ENCODE measurements at regions of chr18 and their contacts with region 1.

Region 1: GRCh38 chr18:2655178-2655953 is at the start of gene SMCHD1:
- DNase-seq: peak; percentile 49 to 91
- H3K4me3 ChIP-seq: peak within 1 kb of the TSS; percentile 74
- H3K27ac ChIP-seq: peak within 1 kb of the TSS; percentile 83
- H3K4me1 ChIP-seq: peaks cover 50% of the 10 kb centered on the region
- H3K27me3 ChIP-seq: no peaks in the 10 kb centered on the region
- CTCF ChIP-seq: no peak
- total RNA-seq, gene SMCHD1: 44.9 and 73.7 TPM in 2 replicates

Region 2: DNA sequence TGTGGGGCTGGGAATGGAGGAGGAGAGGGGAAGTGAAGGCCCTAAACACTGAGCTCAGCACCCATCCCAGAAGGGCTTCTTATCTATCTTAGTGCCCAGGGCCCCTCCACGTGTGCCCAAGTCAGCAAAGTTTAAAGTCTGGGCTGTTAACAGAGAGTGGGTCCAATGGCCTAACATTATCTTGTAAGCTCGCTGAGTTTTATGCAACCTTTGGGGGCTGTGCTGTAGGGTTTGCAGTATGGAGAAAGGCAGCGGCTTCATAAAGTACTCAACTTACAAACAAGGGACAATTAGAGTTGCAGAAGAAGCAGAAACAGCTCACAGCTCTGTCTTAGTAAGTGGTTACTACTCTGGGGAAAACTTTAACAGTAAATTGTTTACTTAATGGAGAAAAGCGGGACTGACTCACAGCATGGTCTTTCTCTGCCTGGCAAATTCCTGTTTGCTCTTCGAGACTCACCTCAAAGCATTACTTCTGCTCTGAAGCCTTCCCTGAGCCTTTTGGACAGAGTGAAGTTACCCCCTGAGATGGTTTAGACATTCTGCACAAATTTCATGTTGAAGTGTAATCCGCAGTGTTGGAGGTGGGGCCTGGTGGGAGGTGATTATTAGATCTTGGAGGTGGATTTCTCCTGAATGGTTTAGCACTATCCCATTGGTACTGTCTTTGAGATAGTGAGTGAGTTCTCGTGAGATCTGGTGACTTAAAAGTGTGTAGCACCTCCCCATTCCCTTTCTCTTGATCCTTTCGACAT is 1952.0 kb before region 1 on chr18:
- CTCF ChIA-PET with region 1: no interaction called
- POLR2A ChIA-PET with region 1: interaction called, 11 read pairs
- intact Hi-C with region 1: no loop called
- DNase-seq: peak in 1 of 2 experiments; percentile 57
- H3K4me3 ChIP-seq: no peak overlapping the region
- H3K27ac ChIP-seq: peak overlapping the region; percentile 73
- H3K4me1 ChIP-seq: peaks cover 23% of the 10 kb centered on the region
- H3K27me3 ChIP-seq: no peaks in the 10 kb centered on the region
- CTCF ChIP-seq: no peak

Region 3: GRCh38 chr18:2486426-2486825 is 168.9 kb before region 1 on chr18:
- CTCF ChIA-PET with region 1: no interaction called
- POLR2A ChIA-PET with region 1: no interaction called
- intact Hi-C with region 1: no loop called
- DNase-seq: no peak
- H3K4me3 ChIP-seq: no peak overlapping the region
- H3K27ac ChIP-seq: no peak overlapping the region
- H3K4me1 ChIP-seq: no peaks in the 10 kb centered on the region
- H3K27me3 ChIP-seq: no peaks in the 10 kb centered on the region
- CTCF ChIP-seq: no peak

Region 4: GRCh38 chr18:2536493-2536892 is 118.9 kb before region 1 on chr18:
- CTCF ChIA-PET with region 1: no interaction called
- POLR2A ChIA-PET with region 1: no interaction called
- intact Hi-C with region 1: no loop called
- DNase-seq: no peak
- H3K4me3 ChIP-seq: no peak overlapping the region
- H3K27ac ChIP-seq: no peak overlapping the region
- H3K4me1 ChIP-seq: peaks cover 2% of the 10 kb centered on the region; the same call in 1 of the 2 replicates
- H3K27me3 ChIP-seq: no peaks in the 10 kb centered on the region
- CTCF ChIP-seq: no peak

Region 5: GRCh38 chr18:2571200-2572143 is 83.9 kb before region 1 on chr18 and contains the starts of genes METTL4 and NDC80:
- CTCF ChIA-PET with region 1: no interaction called
- POLR2A ChIA-PET with region 1: interaction called, 3 read pairs
- intact Hi-C with region 1: loop called (anchors 2 kb)
- DNase-seq: peak; percentile 78 to 86
- H3K4me3 ChIP-seq: peak within 1 kb of the TSS; percentile 88
- H3K27ac ChIP-seq: peak within 1 kb of the TSS; percentile 98
- H3K4me1 ChIP-seq: peaks cover 39% of the 10 kb centered on the region
- H3K27me3 ChIP-seq: no peaks in the 10 kb centered on the region
- CTCF ChIP-seq: no peak
- total RNA-seq, gene METTL4: 21.8 and 23.9 TPM in 2 replicates
- total RNA-seq, gene NDC80: 71.7 and 89.2 TPM in 2 replicates

Region 6: DNA sequence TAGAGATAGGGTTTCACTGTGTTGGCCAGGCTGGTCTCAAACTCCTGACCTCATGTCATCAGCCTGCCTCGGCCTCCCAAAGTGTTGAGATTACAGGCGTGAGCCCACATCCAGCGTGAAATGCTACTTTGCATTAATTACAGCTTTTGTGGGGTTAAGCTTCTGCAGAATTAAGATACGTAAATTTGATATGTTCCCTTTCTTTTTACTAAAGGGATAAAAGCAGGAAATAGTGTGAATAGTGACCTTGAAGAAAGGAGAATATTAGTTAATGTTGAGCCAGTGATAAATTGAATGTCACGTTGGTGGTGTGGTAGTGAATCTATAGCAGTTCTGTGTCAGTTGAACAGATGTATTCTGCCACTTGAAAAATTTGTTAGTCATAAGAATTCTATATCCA is 17.0 kb after region 1 on chr18:
- CTCF ChIA-PET with region 1: no interaction called
- POLR2A ChIA-PET with region 1: interaction called, 21 read pairs
- intact Hi-C with region 1: no loop called
- DNase-seq: no peak
- H3K4me3 ChIP-seq: no peak overlapping the region
- H3K27ac ChIP-seq: no peak overlapping the region
- H3K4me1 ChIP-seq: no peaks in the 10 kb centered on the region
- H3K27me3 ChIP-seq: no peaks in the 10 kb centered on the region
- CTCF ChIP-seq: no peak

Region 7: DNA sequence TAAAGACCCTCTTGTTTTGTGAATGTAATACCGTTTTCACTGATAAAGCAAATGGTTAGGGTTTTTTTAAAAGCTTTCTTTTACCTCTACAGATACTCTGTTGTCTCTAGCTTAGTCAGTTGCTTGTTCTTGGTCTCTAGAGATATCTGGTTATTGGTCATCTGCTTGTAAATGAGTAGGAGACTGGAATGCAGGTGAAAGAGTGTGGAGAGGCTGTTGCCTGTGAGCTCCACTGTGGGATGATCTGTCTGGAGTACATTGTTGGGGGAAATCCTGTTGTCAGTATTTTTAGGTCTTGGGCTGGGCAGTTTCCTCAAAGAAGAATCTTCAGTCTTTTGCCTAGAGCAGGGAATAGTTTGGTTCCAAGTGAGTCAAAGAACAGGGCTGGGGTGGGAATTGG is 67.8 kb after region 1 on chr18:
- CTCF ChIA-PET with region 1: no interaction called
- POLR2A ChIA-PET with region 1: interaction called, 10 read pairs
- intact Hi-C with region 1: no loop called
- DNase-seq: no peak
- H3K4me3 ChIP-seq: no peak overlapping the region
- H3K27ac ChIP-seq: no peak overlapping the region
- H3K4me1 ChIP-seq: no peaks in the 10 kb centered on the region
- H3K27me3 ChIP-seq: no peaks in the 10 kb centered on the region
- CTCF ChIP-seq: no peak

Region 8: GRCh38 chr18:2848247-2849246 is 193.2 kb after region 1 on chr18:
- CTCF ChIA-PET with region 1: no interaction called
- POLR2A ChIA-PET with region 1: interaction called, 11 read pairs
- intact Hi-C with region 1: no loop called
- DNase-seq: no peak
- H3K4me3 ChIP-seq: no peak overlapping the region
- H3K27ac ChIP-seq: no peak overlapping the region
- H3K4me1 ChIP-seq: 0 out of 2 replicates have a peak, but pooled peaks cover 8% of the 10 kb centered on the region
- H3K27me3 ChIP-seq: peaks cover 42% of the 10 kb centered on the region
- CTCF ChIP-seq: no peak

Measured in PC-9 (cell line).